Right ventricle myocardium superior (tissue), 1 donor: ENCODE measurements at regions of chr17 and their contacts with region 1.

Region 1: DNA sequence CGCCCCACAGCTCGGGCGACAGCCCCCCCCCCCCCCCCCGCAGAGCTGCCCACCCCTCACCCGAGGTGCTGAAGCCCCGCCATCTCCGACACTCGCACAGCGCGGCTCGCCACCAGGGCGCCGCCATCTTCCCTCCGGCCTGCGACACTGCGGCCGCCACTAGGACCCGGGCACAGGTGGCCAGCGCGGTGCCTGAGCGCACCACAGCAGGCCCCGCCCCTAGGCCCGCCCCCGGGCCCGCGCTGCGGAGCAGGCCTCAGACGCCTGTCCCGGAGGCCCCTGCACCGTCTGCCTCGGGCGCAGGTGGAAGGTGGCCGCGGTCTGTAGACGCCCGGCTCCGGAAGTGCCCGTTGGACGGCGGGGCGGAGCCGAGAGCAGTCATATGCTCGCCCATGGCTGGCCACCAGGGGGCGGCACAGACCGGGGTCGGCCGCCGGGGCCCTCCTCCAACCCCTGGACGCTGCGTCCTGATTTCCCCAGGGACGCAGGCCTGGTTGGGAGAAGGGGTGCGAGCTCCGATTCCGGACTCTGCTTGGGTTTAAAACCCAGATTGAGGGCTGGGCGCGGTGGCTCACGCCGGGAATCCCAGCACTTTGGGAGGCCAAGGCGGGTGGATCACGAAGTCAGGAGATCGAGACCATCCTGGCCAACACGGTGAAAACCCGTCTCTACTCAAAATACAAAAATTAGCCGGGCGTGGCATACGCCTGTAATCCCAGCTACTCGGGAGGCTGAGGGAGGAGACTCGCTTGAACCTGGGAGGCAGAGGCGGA is at the start of gene MRPL38:
- DNase-seq: peak; percentile 95
- ATAC-seq: peak; percentile 91
- total RNA-seq, gene MRPL38: 113 TPM

Region 2: GRCh38 chr17:76005263-76006149 is 100.6 kb after region 1 on chr17:
- intact Hi-C with region 1: loop called (anchors 1 kb)
- DNase-seq: peak; percentile 63
- ATAC-seq: peak; percentile 80